Activated CD8-positive, alpha-beta T cell treated with anti-CD3 and anti-CD28 coated beads for 36 hours (primary cell): ENCODE measurements at regions of chr9 and their contacts with region 1.

Region 1: DNA sequence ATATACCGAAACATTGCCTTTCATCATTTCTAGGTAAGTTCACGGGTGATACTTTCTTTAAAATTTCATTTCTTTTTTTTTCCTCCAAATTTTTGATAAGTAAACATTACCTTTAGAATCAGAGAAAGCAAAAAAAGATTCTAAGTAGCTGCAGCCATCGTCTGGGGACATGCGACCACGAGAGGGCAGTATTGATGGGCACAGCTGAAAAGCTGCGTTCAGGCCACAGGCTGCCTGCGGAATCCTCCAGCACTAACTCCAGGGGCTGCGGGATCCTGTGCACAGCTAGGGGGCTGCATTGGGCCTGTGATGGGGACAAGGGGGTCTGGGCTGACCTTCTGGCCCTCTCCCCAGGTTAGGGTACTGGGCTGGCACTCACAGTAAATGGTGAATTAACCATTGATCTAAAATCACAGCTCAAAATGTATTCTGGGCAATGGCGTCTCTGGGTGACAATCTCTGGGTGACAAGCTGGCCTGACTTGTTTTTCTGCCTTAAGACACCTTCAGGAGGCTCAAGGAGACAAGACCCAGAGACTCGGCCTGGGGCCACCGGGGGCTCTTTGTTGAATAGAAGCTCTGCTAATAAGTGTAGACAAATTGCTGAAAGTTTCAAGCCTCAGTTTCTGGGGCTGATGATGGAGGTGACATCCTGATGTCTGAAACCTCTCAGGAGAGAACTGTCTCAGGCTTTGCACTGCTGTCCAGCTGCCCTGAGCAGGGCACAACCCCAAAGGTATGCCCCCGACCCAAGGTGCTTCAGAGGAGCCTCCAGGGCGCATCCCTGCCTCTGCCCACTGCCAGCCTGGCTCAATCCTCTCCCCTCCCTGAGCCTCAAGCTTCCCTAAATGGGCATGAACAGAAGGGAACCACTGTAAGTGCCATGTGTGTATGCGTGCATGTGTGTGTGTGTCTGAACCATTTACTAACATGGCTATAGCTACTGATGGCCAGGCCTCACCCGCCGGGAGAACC is 44.3 kb upstream of the SARDH start:
- DNase-seq: peak; percentile 84
- ATAC-seq: peak; percentile 70
- H3K4me3 Mint-ChIP-seq: no peak overlapping the region
- H3K27ac Mint-ChIP-seq: no peak overlapping the region
- H3K4me1 Mint-ChIP-seq: no peaks in the 10 kb centered on the region
- H3K27me3 Mint-ChIP-seq: no peaks in the 10 kb centered on the region
- CTCF ChIP-seq: peak; percentile 73

Region 2: GRCh38 chr9:133701862-133702797 is 80.3 kb before region 1 on chr9:
- CTCF ChIA-PET with region 1: no interaction called
- POLR2A ChIA-PET with region 1: no interaction called
- intact Hi-C with region 1: no loop called
- DNase-seq: peak; percentile 83
- ATAC-seq: peak; percentile 88
- H3K4me3 Mint-ChIP-seq: peak overlapping the region; percentile 84
- H3K27ac Mint-ChIP-seq: peak overlapping the region; percentile 90
- H3K4me1 Mint-ChIP-seq: peaks cover 43% of the 10 kb centered on the region
- H3K27me3 Mint-ChIP-seq: no peaks in the 10 kb centered on the region
- CTCF ChIP-seq: no peak

Region 3: GRCh38 chr9:133726401-133727276 is 55.8 kb before region 1 on chr9:
- CTCF ChIA-PET with region 1: no interaction called
- POLR2A ChIA-PET with region 1: no interaction called
- intact Hi-C with region 1: no loop called
- DNase-seq: peak; percentile 80
- ATAC-seq: peak; percentile 75
- H3K4me3 Mint-ChIP-seq: no peak overlapping the region
- H3K27ac Mint-ChIP-seq: no peak overlapping the region
- H3K4me1 Mint-ChIP-seq: peaks cover 8% of the 10 kb centered on the region
- H3K27me3 Mint-ChIP-seq: no peaks in the 10 kb centered on the region
- CTCF ChIP-seq: peak; percentile 68

Region 4: GRCh38 chr9:133792721-133793470 is 10.5 kb after region 1 on chr9:
- CTCF ChIA-PET with region 1: interaction called, 17 read pairs
- POLR2A ChIA-PET with region 1: no interaction called
- intact Hi-C with region 1: no loop called
- DNase-seq: peak; percentile 66
- ATAC-seq: peak; percentile 94
- H3K4me3 Mint-ChIP-seq: no peak overlapping the region
- H3K27ac Mint-ChIP-seq: no peak overlapping the region
- H3K4me1 Mint-ChIP-seq: peaks cover 6% of the 10 kb centered on the region
- H3K27me3 Mint-ChIP-seq: peaks cover 4% of the 10 kb centered on the region
- CTCF ChIP-seq: peak; percentile 93